H1 (cell line): ENCODE measurements at regions of chr2 and their contacts with region 1.

Region 1: GRCh38 chr2:127324635-127325034 is 30.7 kb upstream of the ERCC3 start:
- DNase-seq: no peak
- H3K4me3 ChIP-seq: no peak overlapping the region
- H3K27ac ChIP-seq: no peak overlapping the region
- H3K4me1 ChIP-seq: no peaks in the 10 kb centered on the region
- H3K27me3 ChIP-seq: no peaks in the 10 kb centered on the region
- CTCF ChIP-seq: peak in 2 of 3 experiments; percentile 34 to 49; a peak in 2 of 4 replicates
- EP300 ChIP-seq: no peak
- POLR2A ChIP-seq: no peak
- RAD21 ChIP-seq: peak; percentile 62 to 64

Region 2: GRCh38 chr2:126907671-126908070 is 417.0 kb before region 1 on chr2:
- CTCF ChIA-PET with region 1: no interaction called
- POLR2A ChIA-PET with region 1: no interaction called
- DNase-seq: peak in 1 of 2 experiments; percentile 37
- H3K4me3 ChIP-seq: no peak overlapping the region
- H3K27ac ChIP-seq: no peak overlapping the region
- H3K4me1 ChIP-seq: no peaks in the 10 kb centered on the region; a peak in 2 of 7 replicates
- H3K27me3 ChIP-seq: no peaks in the 10 kb centered on the region
- CTCF ChIP-seq: no peak
- EP300 ChIP-seq: no peak
- POLR2A ChIP-seq: no peak
- RAD21 ChIP-seq: no peak

Region 3: GRCh38 chr2:127308586-127309138 is 16.0 kb before region 1 on chr2:
- CTCF ChIA-PET with region 1: interaction called, 12 read pairs
- POLR2A ChIA-PET with region 1: interaction called, 3 read pairs
- DNase-seq: no peak
- H3K4me3 ChIP-seq: no peak overlapping the region
- H3K27ac ChIP-seq: no peak overlapping the region
- H3K4me1 ChIP-seq: no peaks in the 10 kb centered on the region
- H3K27me3 ChIP-seq: no peaks in the 10 kb centered on the region
- CTCF ChIP-seq: no peak
- EP300 ChIP-seq: no peak
- POLR2A ChIP-seq: no peak
- RAD21 ChIP-seq: no peak

Region 4: GRCh38 chr2:127422810-127423475 is 98.3 kb after region 1 on chr2:
- CTCF ChIA-PET with region 1: interaction called, 19 read pairs
- POLR2A ChIA-PET with region 1: no interaction called
- DNase-seq: peak in 1 of 2 experiments; percentile 78
- H3K4me3 ChIP-seq: peak overlapping the region; percentile 57 to 85 (median 59)
- H3K27ac ChIP-seq: no peak overlapping the region
- H3K4me1 ChIP-seq: peaks cover 0 to 13% (median 5%) of the 10 kb centered on the region in 4 experiments; a peak in 5 of 7 replicates
- H3K27me3 ChIP-seq: peaks cover 0 to 29% (median 27%) of the 10 kb centered on the region in 4 experiments; a peak in 6 of 7 replicates
- CTCF ChIP-seq: no peak
- EP300 ChIP-seq: no peak
- POLR2A ChIP-seq: peak in 1 of 2 experiments; percentile 45; a peak in 1 of 3 replicates
- RAD21 ChIP-seq: no peak